MCF 10A (cell line): ENCODE measurements at regions of chr11 and their contacts with region 1.

Region 1: DNA sequence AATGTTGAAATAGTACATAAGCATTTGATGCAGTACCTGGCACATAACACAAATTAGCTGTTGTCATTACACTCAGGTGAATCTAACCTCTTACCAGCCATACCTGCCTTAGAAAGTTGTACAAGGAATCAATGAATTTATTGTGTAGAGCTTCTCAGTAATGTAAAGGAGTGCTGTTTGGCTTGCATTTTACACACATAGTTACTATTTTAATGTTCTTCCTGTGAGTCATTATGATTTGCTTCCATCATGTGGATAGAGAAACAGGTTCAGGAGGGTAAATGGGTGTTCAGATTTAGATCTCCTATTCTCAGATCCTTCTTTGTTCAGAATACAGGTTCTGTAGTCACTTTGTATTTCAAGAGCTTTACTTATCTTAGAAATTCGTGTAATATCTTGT is 27.6 kb upstream of the RCE1 start:
- DNase-seq: no peak
- H3K4me3 Mint-ChIP-seq: no peak overlapping the region
- H3K27ac Mint-ChIP-seq: peak overlapping the region; percentile 63
- H3K4me1 Mint-ChIP-seq: peaks cover 7% of the 10 kb centered on the region
- H3K27me3 Mint-ChIP-seq: no peaks in the 10 kb centered on the region
- CTCF ChIP-seq: no peak

Region 2: DNA sequence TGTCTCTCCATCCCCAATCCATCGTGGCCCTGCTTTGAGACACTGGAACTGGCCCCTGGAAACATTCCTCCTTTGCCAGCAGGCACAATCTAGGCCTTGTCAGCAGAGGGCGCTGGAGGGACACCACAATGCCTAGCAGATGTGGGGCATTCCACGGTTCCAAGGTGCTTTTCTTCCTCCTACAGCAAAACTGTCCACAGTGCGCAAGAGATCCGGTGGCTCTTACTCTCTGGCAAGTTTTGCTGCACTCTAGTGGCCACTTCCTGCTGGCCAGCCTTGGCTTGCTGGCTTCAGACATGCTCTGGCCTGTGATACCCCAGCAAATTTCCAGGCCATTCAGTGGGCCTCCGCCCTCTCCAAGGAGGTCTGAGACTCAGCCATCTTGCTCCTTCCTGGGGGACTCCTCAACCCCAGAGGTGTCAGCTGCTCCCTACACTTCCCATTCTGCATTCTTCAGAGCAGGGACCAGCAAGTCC is 120.9 kb before region 1 on chr11:
- CTCF ChIA-PET with region 1: interaction called, 4 read pairs
- POLR2A ChIA-PET with region 1: interaction called, 4 read pairs
- intact Hi-C with region 1: loop called (anchors 5 kb)
- DNase-seq: peak; percentile 96
- H3K4me3 Mint-ChIP-seq: no peak overlapping the region
- H3K27ac Mint-ChIP-seq: peak overlapping the region; percentile 69
- H3K4me1 Mint-ChIP-seq: no peaks in the 10 kb centered on the region
- H3K27me3 Mint-ChIP-seq: no peaks in the 10 kb centered on the region
- CTCF ChIP-seq: peak; percentile 94

Region 3: DNA sequence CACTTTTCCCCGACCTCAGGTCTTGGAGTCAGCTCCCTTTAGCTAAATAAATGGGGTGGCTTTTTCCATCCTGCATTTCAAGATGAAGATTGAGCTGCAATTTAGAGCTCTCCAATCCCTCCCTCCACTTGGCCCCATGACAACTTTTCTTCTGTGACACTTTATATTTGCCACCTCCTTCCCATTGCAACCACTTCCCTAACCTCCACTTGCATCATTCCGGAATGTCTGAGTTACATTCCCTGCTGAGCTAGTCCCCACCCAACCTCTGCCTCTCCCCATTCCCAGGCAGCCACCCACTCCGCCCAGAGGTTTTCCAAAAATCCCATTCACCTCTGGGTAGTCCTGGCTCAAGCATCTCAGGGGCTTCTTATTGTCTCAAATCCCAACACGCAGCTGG is 117.9 kb after region 1 on chr11:
- CTCF ChIA-PET with region 1: no interaction called
- POLR2A ChIA-PET with region 1: no interaction called
- intact Hi-C with region 1: no loop called
- DNase-seq: peak; percentile 72
- H3K4me3 Mint-ChIP-seq: peak overlapping the region; percentile 40
- H3K27ac Mint-ChIP-seq: peak overlapping the region; percentile 82
- H3K4me1 Mint-ChIP-seq: peaks cover 45% of the 10 kb centered on the region
- H3K27me3 Mint-ChIP-seq: no peaks in the 10 kb centered on the region
- CTCF ChIP-seq: no peak